AG04449 (cell line): ENCODE measurements at regions of chr2 and their contacts with region 1.

Region 1: DNA sequence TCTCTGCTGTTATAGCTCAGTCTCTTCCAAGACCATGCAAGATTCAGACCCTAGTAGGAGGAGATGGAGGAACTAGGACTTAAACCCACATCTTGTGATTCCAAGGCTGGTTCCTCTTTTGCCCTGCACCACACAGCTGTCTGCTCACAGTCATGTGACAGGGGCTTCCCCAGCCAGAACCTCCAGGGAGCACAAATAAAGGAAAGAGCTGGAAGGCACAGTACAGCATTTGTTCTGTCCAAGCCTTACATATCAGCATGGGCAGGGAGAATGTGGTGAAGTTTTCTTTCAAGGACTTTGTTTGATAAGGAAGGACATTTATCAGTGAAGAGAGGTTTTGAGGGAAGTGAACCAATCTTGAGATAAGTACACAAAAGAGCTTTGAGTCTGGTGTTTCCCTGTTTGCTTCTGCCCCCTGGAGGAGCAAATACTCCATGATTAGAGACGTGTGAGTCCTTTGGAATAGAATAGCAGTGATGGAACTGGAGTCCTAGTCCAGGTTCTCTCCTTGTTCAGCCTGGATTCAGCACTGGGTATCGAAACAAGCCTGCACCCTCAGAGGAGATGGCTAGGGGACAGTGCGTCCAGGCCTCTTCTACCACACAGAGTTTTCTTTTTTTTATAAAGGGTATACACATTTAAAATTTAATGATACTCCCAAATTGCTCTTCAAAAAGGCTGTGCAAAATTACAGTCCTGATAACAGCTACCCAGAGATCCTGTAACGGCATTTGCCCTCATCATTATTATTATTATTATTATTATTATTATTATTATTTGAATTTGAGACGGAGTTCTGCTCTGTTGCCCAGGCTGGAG is 24.6 kb upstream of the CASP10 start:
- DNase-seq: no peak
- H3K4me3 ChIP-seq: no peak overlapping the region
- CTCF ChIP-seq: peak; percentile 57

Region 2: GRCh38 chr2:200901459-200902072 is 256.8 kb before region 1 on chr2:
- CTCF ChIA-PET with region 1: interaction called, 47 read pairs
- POLR2A ChIA-PET with region 1: no interaction called
- DNase-seq: peak; percentile 66
- H3K4me3 ChIP-seq: no peak overlapping the region
- CTCF ChIP-seq: peak; percentile 67

Region 3: GRCh38 chr2:201108341-201108740 is 50.0 kb before region 1 on chr2:
- CTCF ChIA-PET with region 1: interaction called, 90 read pairs
- POLR2A ChIA-PET with region 1: no interaction called
- DNase-seq: no peak
- H3K4me3 ChIP-seq: no peak overlapping the region
- CTCF ChIP-seq: no peak

Region 4: DNA sequence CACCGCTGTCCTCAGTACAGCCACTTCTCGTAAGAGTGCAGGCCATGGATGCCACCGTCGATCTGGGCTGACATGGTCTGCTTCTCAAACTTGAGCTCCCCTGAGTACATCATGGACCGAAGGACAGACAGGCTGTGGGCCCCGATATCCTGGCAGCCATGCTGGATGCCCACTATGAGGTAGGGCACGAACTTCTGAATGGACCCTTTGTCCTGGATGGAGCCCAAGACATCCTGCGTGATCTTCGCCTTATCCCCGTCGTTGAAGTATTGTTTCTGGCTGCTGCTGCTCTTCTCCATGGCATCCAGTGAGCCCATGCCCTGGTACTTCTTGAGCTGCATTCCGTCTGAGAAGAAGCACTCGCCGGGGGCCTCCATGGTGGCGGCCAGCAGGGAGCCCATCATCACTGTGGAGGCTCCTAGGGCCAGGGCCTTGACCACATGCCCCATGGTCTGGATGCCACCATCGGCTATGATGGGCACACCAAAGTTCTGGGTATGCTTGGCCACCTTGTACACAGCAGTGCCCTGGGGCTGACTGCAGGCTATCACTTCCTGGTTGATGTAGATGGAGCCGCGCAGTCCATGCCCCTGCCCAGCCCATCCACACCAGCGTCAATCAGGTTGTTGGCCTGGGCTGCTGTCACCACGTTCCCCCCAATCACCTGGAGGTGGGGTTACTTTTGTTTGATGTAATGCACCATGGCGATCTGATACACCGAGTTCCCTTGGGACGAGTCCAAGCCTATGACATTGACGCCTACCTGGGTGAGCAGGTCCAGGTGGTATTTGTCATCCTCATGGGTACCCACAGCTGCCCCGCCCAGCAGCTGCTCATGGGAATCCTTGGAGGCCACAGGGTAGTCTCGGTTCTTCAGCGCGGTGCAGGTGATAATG is 20.6 kb before region 1 on chr2:
- CTCF ChIA-PET with region 1: interaction called, 11 read pairs
- POLR2A ChIA-PET with region 1: no interaction called
- DNase-seq: no peak
- H3K4me3 ChIP-seq: no peak overlapping the region
- CTCF ChIP-seq: no peak

Region 5: GRCh38 chr2:201171259-201171814 is 13.0 kb after region 1 on chr2:
- CTCF ChIA-PET with region 1: interaction called, 22 read pairs
- POLR2A ChIA-PET with region 1: no interaction called
- DNase-seq: no peak
- H3K4me3 ChIP-seq: no peak overlapping the region
- CTCF ChIP-seq: no peak